ENCODE measurements at regions of chr6 and their contacts with region 1.

Region 1: GRCh38 chr6:149701714-149702113 is 16.2 kb downstream of the LATS1 start:
- DNase-seq: no peak
- H3K4me3 ChIP-seq: peak overlapping the region in 1 of 4 experiments; percentile 46; a peak in 3 of 8 replicates
- H3K27ac ChIP-seq: peak overlapping the region; percentile 23; the same call in 1 of the 2 replicates
- H3K4me1 ChIP-seq: peaks cover 2 to 3% (median 2%) of the 10 kb centered on the region in 4 experiments; a peak in 4 of 7 replicates
- H3K27me3 ChIP-seq: no peaks in the 10 kb centered on the region
- CTCF ChIP-seq: no peak
- EP300 ChIP-seq: no peak
- POLR2A ChIP-seq: no peak
- RAD21 ChIP-seq: no peak

Region 2: DNA sequence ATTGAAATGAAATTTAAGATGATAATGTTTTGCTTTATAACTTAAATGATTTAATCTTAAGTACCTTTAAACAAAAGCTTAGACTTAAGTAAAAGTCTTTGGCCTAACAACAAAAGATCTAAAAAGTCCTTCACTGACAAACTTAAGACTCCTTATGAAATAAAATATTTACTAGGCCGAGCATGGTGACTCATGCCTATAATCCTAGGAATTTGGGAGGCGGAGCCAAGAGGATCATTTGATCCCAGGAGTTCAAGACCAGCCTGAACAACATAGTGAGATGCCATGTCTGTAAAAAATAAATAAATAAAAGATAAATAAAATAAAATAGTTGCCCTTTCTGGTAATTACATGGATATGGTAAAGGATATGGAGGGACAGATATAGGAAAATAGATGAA is 65.6 kb before region 1 on chr6:
- CTCF ChIA-PET with region 1: no interaction called
- POLR2A ChIA-PET with region 1: no interaction called
- DNase-seq: no peak
- H3K4me3 ChIP-seq: no peak overlapping the region
- H3K27ac ChIP-seq: no peak overlapping the region
- H3K4me1 ChIP-seq: no peaks in the 10 kb centered on the region
- H3K27me3 ChIP-seq: no peaks in the 10 kb centered on the region
- CTCF ChIP-seq: no peak
- EP300 ChIP-seq: no peak
- POLR2A ChIP-seq: no peak
- RAD21 ChIP-seq: no peak

Region 3: GRCh38 chr6:149717588-149718458 is 16.1 kb after region 1 on chr6 and contains the start of gene LATS1:
- CTCF ChIA-PET with region 1: interaction called, 8 read pairs
- POLR2A ChIA-PET with region 1: interaction called, 14 read pairs
- DNase-seq: peak in 1 of 2 experiments; percentile 95
- H3K4me3 ChIP-seq: peak within 1 kb of the TSS; percentile 81 to 93 (median 86)
- H3K27ac ChIP-seq: peak within 1 kb of the TSS; percentile 93
- H3K4me1 ChIP-seq: peaks cover 0 to 4% (median 2%) of the 10 kb centered on the region in 4 experiments; a peak in 3 of 7 replicates
- H3K27me3 ChIP-seq: no peaks in the 10 kb centered on the region
- CTCF ChIP-seq: 0 out of 4 replicates have a peak, but pooled peaks of 1 of the 3 experiments have one; percentile 9
- EP300 ChIP-seq: no peak
- POLR2A ChIP-seq: peak; percentile 72 to 98
- RAD21 ChIP-seq: no peak
- total RNA-seq, gene LATS1: 20.3 and 21.7 TPM in 2 replicates

Measured in H1 (cell line).